OCI-LY7 (cell line): ENCODE measurements at regions of chr11 and their contacts with region 1.

Region 1: DNA sequence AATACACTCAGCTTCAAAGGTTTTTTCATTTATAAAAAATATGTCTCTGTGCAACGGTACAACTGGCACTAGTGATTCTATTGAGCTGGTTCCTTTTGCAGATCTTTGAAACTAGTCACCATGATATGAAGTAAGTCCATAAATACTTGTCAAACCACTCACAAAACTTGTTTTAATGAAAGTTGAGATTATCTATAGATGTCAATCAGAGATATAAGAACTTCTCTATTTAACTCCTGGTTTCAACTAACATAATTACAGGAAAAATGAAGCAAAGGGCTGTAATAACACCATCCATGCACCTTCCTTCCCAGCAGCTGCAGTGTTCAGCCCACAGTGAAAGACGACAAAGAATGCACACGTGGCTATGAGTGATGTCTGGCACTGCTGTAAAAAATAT is 44.7 kb downstream of the TMEM123 start:
- DNase-seq: no peak
- H3K4me3 ChIP-seq: no peak overlapping the region
- H3K27ac ChIP-seq: no peak overlapping the region
- H3K4me1 ChIP-seq: peaks cover 24% of the 10 kb centered on the region
- CTCF ChIP-seq: no peak

Region 2: DNA sequence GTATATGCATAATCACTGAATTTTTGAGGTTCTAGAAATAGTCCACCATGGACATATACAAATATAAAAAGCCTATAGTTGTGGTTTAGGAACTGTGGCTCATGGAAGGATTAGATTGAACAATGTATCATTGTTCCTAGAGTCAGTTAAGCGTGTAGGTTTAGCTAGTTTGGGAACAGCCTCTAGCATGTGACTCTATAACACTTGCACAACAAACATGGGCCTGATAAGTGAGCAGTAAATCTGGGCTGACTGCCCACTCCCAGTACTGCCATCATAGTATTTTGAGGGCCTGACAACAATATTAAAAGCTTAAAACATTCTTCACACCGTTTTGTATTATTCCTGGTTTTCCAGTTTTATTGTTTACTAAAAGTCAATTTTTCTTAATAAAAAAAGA is 250.7 kb before region 1 on chr11:
- CTCF ChIA-PET with region 1: no interaction called
- POLR2A ChIA-PET with region 1: no interaction called
- intact Hi-C with region 1: no loop called
- DNase-seq: no peak
- H3K4me3 ChIP-seq: no peak overlapping the region
- H3K27ac ChIP-seq: no peak overlapping the region
- H3K4me1 ChIP-seq: no peaks in the 10 kb centered on the region
- CTCF ChIP-seq: no peak

Region 3: DNA sequence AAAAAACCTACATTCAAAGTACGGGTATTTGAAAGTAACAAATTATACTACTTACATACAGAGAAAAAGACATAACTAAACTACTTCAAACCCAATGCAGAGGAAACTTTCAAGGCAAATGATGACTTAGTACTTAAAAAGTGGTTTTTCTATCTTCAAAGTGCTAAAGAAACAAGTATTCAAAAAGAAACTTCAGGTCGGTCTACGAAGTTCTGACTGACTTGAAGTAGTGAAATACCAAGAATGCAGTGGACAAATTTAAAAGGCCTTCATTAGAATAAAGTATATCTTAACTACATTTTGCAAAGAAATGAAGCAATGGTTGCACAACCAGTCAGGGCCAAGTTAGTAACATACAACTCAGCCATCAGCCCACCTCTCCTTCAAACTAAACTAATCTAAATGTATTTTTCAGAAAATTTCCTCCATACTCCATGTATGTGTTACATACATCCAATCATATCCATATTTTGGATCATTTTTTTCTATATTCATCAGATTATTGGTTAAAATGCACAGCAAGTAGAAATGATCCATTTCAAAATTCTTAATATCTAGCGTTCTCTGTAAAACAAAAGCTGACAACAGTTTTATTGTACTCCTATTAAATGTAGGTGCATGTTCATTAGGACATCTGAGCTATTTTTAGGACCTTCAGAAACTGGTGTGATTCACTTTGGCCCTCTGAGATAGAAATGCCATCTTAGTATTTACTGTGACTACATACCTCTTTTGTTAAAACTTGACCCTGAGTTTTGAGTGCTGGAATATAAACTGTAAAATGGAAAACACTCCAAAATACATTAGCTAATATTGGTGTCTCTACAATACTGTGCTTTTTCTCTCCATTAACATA is 11.0 kb before region 1 on chr11:
- CTCF ChIA-PET with region 1: interaction called, 3 read pairs
- POLR2A ChIA-PET with region 1: interaction called, 11 read pairs
- intact Hi-C with region 1: no loop called
- DNase-seq: no peak
- H3K4me3 ChIP-seq: no peak overlapping the region
- H3K27ac ChIP-seq: no peak overlapping the region
- H3K4me1 ChIP-seq: peaks cover 42% of the 10 kb centered on the region
- CTCF ChIP-seq: no peak

Region 4: GRCh38 chr11:102469172-102469821 is 61.4 kb after region 1 on chr11:
- CTCF ChIA-PET with region 1: no interaction called
- POLR2A ChIA-PET with region 1: no interaction called
- intact Hi-C with region 1: no loop called
- DNase-seq: no peak
- H3K4me3 ChIP-seq: no peak overlapping the region
- H3K27ac ChIP-seq: no peak overlapping the region
- H3K4me1 ChIP-seq: peaks cover 82% of the 10 kb centered on the region
- CTCF ChIP-seq: no peak